Sciatic nerve (tissue), 2 donors: ENCODE measurements at regions of chr5 and their contacts with region 1.

Region 1: DNA sequence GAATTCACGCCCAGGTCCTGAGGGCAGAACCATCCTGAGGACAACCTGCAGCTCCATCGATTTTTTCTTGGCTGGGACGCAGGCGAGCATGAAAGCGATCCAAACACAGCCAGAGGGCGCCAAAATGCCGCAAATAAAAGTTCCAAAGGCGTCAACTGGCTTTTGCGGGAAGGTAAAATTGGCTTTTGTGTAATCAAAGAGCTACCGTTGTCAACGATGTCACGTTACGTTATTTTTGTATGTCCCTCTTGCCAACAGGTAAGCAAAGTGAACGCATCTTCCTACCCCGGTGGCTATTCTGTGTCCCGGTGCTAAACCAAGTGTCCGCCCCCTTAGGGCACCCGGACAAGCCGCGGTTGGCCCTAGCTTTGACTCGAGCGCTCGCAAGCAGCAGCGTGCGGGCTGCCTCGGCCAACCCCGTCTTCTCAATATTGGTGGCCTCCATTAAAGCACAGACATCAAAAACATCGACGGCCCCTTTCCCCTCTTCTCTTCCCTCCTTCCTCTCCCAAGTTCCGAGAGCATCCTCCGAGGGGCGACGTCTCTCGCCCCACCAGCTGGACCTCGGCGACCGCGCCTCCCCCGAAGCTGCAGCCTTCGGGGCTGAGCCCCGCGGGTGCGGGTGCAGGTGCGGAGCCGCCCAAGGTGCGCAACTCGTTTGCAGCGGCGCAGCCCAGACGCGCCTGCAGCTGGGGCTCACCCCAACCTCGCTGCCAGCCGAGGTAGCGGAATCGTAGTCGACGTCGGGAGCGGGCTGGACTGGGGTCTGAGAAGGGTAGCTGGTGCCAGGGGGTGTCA is 1.1 kb upstream of the BASP1 start:
- DNase-seq: peak; percentile 86
- ATAC-seq: peak; percentile 73

Region 2: DNA sequence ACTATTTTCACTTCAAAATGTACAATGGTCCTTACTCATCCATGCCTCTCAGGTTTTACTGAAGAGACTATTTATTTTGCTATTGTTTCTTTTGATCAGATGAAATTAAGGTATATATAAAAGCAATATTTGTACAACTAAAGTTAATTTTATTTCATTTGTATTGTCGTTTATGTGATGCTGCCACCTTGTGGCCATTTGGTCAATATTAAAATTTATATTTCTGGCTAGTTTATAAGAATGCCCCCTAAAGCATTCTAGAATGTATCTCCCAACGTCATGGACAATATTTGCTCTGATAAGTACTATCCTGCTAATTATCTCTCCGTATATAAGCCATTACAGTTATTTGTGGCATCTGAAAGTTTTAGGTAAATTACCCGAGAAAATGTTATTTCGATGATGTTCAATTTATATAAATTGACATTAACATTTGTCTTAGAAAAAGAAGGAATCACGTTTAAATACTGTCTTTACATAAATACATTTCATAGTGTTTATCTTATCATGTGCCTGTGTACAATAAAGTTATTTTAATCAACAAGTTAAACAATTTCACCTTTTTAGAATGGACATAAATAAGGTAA is 1097.9 kb after region 1 on chr5:
- intact Hi-C with region 1: loop called (anchors 10 kb)
- DNase-seq: no peak
- ATAC-seq: no peak